ENCODE measurements at regions of chr15 and their contacts with region 1.

Region 1: GRCh38 chr15:77642793-77643430 is 10.2 kb upstream of the LINGO1 start:
- DNase-seq: peak; percentile 37
- H3K4me3 ChIP-seq: no peak overlapping the region
- H3K27ac ChIP-seq: no peak overlapping the region
- H3K4me1 ChIP-seq: no peaks in the 10 kb centered on the region
- H3K27me3 ChIP-seq: no peaks in the 10 kb centered on the region
- CTCF ChIP-seq: no peak

Region 2: GRCh38 chr15:77168616-77169015 is 474.3 kb before region 1 on chr15:
- CTCF ChIA-PET with region 1: no interaction called
- dilution Hi-C with region 1: no loop called
- in situ Hi-C with region 1: no loop called
- intact Hi-C with region 1: no loop called
- DNase-seq: peak; percentile 7
- H3K4me3 ChIP-seq: no peak overlapping the region
- H3K27ac ChIP-seq: no peak overlapping the region
- H3K4me1 ChIP-seq: no peaks in the 10 kb centered on the region
- H3K27me3 ChIP-seq: no peaks in the 10 kb centered on the region
- CTCF ChIP-seq: no peak

Region 3: DNA sequence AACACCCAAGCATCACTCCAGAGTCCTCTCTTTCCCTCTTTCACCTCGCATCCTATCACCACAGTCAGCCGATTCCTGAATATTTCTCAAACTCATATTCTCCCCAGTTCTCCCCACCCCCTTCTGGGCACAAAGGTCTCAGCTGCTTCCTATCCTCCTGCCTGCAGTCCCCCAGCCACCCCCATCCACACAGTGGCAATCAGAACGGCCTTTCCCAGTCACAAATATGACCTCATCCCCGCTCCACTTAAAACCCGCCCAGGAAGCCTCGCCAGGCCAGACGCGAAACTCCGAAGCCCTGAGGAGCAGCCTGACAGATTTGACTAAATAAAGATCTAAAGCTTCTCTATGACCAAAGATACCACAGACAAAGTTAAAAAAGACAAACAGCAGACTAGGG is 39.7 kb after region 1 on chr15:
- CTCF ChIA-PET with region 1: no interaction called
- dilution Hi-C with region 1: loop called (anchors 5 kb)
- in situ Hi-C with region 1: no loop called
- intact Hi-C with region 1: no loop called
- DNase-seq: no peak
- H3K4me3 ChIP-seq: no peak overlapping the region
- H3K27ac ChIP-seq: no peak overlapping the region
- H3K4me1 ChIP-seq: no peaks in the 10 kb centered on the region
- H3K27me3 ChIP-seq: no peaks in the 10 kb centered on the region
- CTCF ChIP-seq: no peak

Region 4: GRCh38 chr15:77709135-77709886 is 66.4 kb after region 1 on chr15:
- CTCF ChIA-PET with region 1: no interaction called
- dilution Hi-C with region 1: loop called (anchors 5 kb)
- in situ Hi-C with region 1: no loop called
- intact Hi-C with region 1: no loop called
- DNase-seq: no peak
- H3K4me3 ChIP-seq: no peak overlapping the region
- H3K27ac ChIP-seq: no peak overlapping the region
- H3K4me1 ChIP-seq: no peaks in the 10 kb centered on the region
- H3K27me3 ChIP-seq: peaks cover 6% of the 10 kb centered on the region
- CTCF ChIP-seq: no peak

Region 5: GRCh38 chr15:77720655-77721054 is 77.7 kb after region 1 on chr15:
- CTCF ChIA-PET with region 1: no interaction called
- dilution Hi-C with region 1: no loop called
- in situ Hi-C with region 1: no loop called
- intact Hi-C with region 1: no loop called
- DNase-seq: no peak
- H3K4me3 ChIP-seq: no peak overlapping the region
- H3K27ac ChIP-seq: no peak overlapping the region
- H3K4me1 ChIP-seq: no peaks in the 10 kb centered on the region
- H3K27me3 ChIP-seq: no peaks in the 10 kb centered on the region
- CTCF ChIP-seq: no peak

Measured in mammary epithelial cell (primary cell).